Activated CD4-positive, alpha-beta memory T cell treated with anti-CD3 and anti-CD28 coated beads for 36 hours (primary cell): ENCODE measurements at regions of chr5 and their contacts with region 1.

Region 1: GRCh38 chr5:151825445-151825844 is 53.7 kb downstream of the G3BP1 start:
- DNase-seq: peak; percentile 38
- H3K4me3 Mint-ChIP-seq: no peak overlapping the region
- H3K27ac Mint-ChIP-seq: no peak overlapping the region
- H3K4me1 Mint-ChIP-seq: peaks cover 8% of the 10 kb centered on the region
- H3K27me3 Mint-ChIP-seq: no peaks in the 10 kb centered on the region

Region 2: GRCh38 chr5:151815051-151815450 is 10.4 kb before region 1 on chr5:
- CTCF ChIA-PET with region 1: interaction called, 12 read pairs
- POLR2A ChIA-PET with region 1: no interaction called
- intact Hi-C with region 1: no loop called
- DNase-seq: no peak
- H3K4me3 Mint-ChIP-seq: no peak overlapping the region
- H3K27ac Mint-ChIP-seq: no peak overlapping the region
- H3K4me1 Mint-ChIP-seq: peaks cover 14% of the 10 kb centered on the region
- H3K27me3 Mint-ChIP-seq: no peaks in the 10 kb centered on the region

Region 3: GRCh38 chr5:152142840-152143469 is 317.5 kb after region 1 on chr5:
- CTCF ChIA-PET with region 1: interaction called, 134 read pairs
- POLR2A ChIA-PET with region 1: no interaction called
- intact Hi-C with region 1: loop called (anchors 1 kb)
- DNase-seq: peak; percentile 73
- H3K4me3 Mint-ChIP-seq: no peak overlapping the region
- H3K27ac Mint-ChIP-seq: no peak overlapping the region
- H3K4me1 Mint-ChIP-seq: no peaks in the 10 kb centered on the region
- H3K27me3 Mint-ChIP-seq: no peaks in the 10 kb centered on the region

Region 4: DNA sequence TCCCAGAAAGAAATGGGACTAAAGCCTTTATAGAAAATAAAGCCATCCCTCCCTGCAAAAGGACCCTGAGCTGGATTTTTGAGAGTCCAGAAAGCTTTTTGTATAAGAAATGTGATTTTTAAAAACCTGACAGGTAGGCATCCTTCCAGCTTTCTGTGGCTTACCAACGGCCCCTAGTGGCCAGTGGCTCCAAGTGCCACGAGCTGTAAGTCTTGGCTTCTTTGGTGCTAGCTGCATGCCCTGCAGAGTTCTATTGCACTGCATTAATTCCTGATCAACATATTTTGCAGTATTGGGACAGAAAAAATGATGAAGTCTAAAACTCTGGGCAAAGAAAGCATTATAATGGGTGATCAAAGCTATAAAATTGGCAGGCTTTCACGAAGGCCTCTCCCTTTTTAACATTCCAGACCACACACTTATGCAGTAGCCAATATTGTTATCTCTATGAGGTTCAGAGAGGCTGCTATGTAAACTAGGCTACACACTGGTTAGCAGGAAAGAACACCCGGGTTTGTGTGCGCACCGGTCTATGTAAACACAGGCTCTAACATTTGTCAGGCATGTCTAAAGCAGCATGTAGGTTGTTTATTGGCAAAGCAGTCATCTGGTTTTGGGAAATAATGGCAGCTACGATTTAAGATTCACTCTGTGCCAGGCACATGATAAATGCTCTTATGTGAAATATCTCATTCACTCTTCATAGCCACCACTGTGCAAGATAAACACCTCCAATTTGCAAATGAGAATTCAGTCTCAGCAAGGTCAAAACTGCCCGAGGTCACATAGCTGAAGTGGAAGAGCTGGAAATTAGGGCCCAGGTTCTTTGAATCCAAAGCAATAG is 524.5 kb after region 1 on chr5:
- CTCF ChIA-PET with region 1: interaction called, 38 read pairs
- POLR2A ChIA-PET with region 1: no interaction called
- intact Hi-C with region 1: no loop called
- DNase-seq: peak; percentile 41
- H3K4me3 Mint-ChIP-seq: no peak overlapping the region
- H3K27ac Mint-ChIP-seq: no peak overlapping the region
- H3K4me1 Mint-ChIP-seq: no peaks in the 10 kb centered on the region
- H3K27me3 Mint-ChIP-seq: no peaks in the 10 kb centered on the region

Region 5: DNA sequence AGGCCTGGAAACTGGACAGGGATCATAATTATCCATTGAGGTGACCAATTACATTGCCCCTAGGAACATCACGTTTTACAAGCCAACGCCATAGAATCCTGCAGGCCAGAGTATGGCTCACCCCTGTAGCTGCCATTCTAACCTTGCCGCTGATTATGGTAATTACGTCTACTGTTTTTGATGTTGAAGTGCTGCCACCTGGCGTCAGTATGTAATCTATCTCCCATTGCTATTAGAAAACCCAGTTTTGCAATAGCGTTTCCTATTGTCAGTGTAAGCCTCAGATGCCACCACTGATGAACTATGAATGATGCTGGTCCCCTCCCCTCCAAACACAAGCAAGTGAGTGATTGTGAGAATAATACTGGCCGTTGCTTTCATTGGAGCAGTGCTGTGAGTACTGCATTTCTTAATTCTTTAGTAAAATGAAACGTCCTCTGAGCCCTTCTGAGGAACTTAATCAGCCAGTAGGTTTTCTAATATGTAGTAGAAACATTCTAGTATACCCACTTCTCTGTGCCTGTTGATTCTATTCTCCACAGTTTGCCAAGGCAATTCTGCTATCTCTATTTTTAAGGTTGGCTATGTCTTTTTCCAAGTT is 680.1 kb after region 1 on chr5:
- CTCF ChIA-PET with region 1: interaction called, 12 read pairs
- POLR2A ChIA-PET with region 1: no interaction called
- intact Hi-C with region 1: loop called (anchors 2 kb)
- DNase-seq: peak; percentile 56
- H3K4me3 Mint-ChIP-seq: no peak overlapping the region
- H3K27ac Mint-ChIP-seq: no peak overlapping the region
- H3K4me1 Mint-ChIP-seq: peaks cover 4% of the 10 kb centered on the region
- H3K27me3 Mint-ChIP-seq: peaks cover 12% of the 10 kb centered on the region

Region 6: DNA sequence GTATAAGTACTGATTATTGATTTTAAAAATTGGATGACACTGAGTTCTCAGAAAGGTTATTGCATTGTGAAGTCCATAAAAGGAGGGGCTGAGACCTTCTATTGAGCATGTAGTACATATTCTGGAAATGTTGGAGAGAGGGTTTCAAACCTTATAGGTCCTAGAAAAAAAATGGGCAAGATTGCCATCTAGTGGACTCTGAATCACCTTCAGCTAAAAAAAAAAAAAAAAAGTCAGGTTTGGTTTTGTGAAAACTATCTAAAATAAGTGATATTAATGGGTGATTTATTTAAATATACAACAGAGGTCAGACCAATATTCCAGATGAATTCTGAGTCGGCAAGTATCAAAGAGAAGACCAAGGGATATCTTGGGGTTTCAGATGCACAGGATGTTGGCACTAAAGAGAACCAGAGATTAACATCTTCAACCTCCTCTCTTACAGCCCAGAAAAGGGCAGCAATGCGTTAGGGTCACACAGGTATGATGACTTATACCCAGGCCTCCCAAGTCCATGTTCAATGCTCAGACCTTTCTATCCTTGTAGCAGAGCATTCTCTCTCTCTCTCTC is 689.5 kb after region 1 on chr5:
- CTCF ChIA-PET with region 1: interaction called, 10 read pairs
- POLR2A ChIA-PET with region 1: no interaction called
- intact Hi-C with region 1: no loop called
- DNase-seq: no peak
- H3K4me3 Mint-ChIP-seq: no peak overlapping the region
- H3K27ac Mint-ChIP-seq: no peak overlapping the region
- H3K4me1 Mint-ChIP-seq: no peaks in the 10 kb centered on the region
- H3K27me3 Mint-ChIP-seq: peaks cover 4% of the 10 kb centered on the region